IMR-90 (cell line): ENCODE measurements at regions of chr2 and their contacts with region 1.

Region 1: GRCh38 chr2:70948337-70949003 is 12.8 kb downstream of the ATP6V1B1 start:
- DNase-seq: peak; percentile 71
- ATAC-seq: peak; percentile 96
- H3K4me3 ChIP-seq: peak overlapping the region; percentile 37; the same call in 1 of the 2 replicates
- H3K27ac ChIP-seq: no peak overlapping the region
- H3K4me1 ChIP-seq: peaks cover 4% of the 10 kb centered on the region
- H3K27me3 ChIP-seq: no peaks in the 10 kb centered on the region
- CTCF ChIP-seq: peak; percentile 78
- POLR2A ChIP-seq: no peak
- RAD21 ChIP-seq: peak; percentile 50

Region 2: GRCh38 chr2:70301344-70302194 is 646.9 kb before region 1 on chr2 and contains the start of gene FAM136A:
- CTCF ChIA-PET with region 1: interaction called, 8 read pairs
- POLR2A ChIA-PET with region 1: no interaction called
- dilution Hi-C with region 1: no loop called
- in situ Hi-C with region 1: no loop called
- intact Hi-C with region 1: loop called (anchors 1 kb)
- DNase-seq: peak; percentile 56
- ATAC-seq: peak; percentile 99
- H3K4me3 ChIP-seq: peak within 1 kb of the TSS; percentile 90
- H3K27ac ChIP-seq: peak within 1 kb of the TSS; percentile 64
- H3K4me1 ChIP-seq: peaks cover 3% of the 10 kb centered on the region; the same call in 1 of the 2 replicates
- H3K27me3 ChIP-seq: no peaks in the 10 kb centered on the region
- CTCF ChIP-seq: peak; percentile 84
- POLR2A ChIP-seq: no peak
- RAD21 ChIP-seq: peak; percentile 43
- total RNA-seq, gene FAM136A: 19.9 and 35.0 TPM in 2 replicates

Region 3: GRCh38 chr2:70789304-70790135 is 158.9 kb before region 1 on chr2:
- CTCF ChIA-PET with region 1: no interaction called
- POLR2A ChIA-PET with region 1: no interaction called
- dilution Hi-C with region 1: no loop called
- in situ Hi-C with region 1: no loop called
- intact Hi-C with region 1: loop called (anchors 1 kb)
- DNase-seq: peak; percentile 25
- ATAC-seq: peak; percentile 81
- H3K4me3 ChIP-seq: no peak overlapping the region
- H3K27ac ChIP-seq: no peak overlapping the region
- H3K4me1 ChIP-seq: no peaks in the 10 kb centered on the region
- H3K27me3 ChIP-seq: peaks cover 33% of the 10 kb centered on the region
- CTCF ChIP-seq: peak; percentile 45
- POLR2A ChIP-seq: no peak
- RAD21 ChIP-seq: peak; percentile 49

Region 4: DNA sequence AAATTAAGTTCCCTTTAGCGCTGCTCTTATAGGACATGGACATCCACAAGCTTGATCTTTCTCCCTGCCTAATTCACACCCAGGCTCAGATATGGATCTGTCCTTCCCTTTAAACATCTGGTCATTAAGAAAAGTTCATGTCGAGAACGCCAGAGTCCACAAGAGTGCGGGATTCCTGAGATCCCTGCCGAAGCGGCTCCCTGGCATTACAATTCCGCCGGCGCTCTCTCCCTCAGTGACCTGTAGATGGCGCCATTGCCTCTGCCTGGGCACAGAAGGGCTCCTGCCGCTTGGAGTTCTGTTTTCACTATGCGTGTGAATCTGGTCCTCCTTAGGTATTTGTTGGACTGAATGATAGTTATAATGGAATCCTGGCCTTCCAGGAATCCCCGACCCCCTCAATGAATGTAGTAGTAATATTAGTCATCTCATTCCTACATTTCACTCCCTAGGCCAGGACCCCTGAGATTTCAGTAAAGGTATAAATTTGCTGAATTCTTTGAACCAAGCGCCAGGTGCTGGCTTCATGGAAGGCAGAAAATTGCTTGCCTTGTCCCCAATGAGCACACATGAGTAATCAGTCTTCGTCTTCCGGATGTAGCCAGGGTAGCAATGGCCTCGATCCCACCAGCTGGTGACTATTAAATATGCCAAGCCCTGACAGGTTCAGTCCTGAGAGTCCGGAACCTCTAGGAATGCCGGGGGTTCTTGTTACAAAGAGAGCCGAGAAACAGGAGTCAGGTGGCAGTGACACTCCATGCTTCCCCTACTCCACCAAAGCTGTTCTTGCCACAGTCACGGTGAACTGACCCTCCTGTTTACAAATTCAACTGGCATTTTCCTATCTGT is 86.5 kb before region 1 on chr2:
- CTCF ChIA-PET with region 1: interaction called, 12 read pairs
- POLR2A ChIA-PET with region 1: no interaction called
- dilution Hi-C with region 1: no loop called
- in situ Hi-C with region 1: loop called (anchors 5 kb)
- intact Hi-C with region 1: loop called (anchors 1 kb)
- DNase-seq: peak; percentile 62
- ATAC-seq: peak; percentile 98
- H3K4me3 ChIP-seq: no peak overlapping the region
- H3K27ac ChIP-seq: no peak overlapping the region
- H3K4me1 ChIP-seq: no peaks in the 10 kb centered on the region
- H3K27me3 ChIP-seq: peaks cover 38% of the 10 kb centered on the region
- CTCF ChIP-seq: peak; percentile 98
- POLR2A ChIP-seq: no peak
- RAD21 ChIP-seq: peak; percentile 87

Region 5: DNA sequence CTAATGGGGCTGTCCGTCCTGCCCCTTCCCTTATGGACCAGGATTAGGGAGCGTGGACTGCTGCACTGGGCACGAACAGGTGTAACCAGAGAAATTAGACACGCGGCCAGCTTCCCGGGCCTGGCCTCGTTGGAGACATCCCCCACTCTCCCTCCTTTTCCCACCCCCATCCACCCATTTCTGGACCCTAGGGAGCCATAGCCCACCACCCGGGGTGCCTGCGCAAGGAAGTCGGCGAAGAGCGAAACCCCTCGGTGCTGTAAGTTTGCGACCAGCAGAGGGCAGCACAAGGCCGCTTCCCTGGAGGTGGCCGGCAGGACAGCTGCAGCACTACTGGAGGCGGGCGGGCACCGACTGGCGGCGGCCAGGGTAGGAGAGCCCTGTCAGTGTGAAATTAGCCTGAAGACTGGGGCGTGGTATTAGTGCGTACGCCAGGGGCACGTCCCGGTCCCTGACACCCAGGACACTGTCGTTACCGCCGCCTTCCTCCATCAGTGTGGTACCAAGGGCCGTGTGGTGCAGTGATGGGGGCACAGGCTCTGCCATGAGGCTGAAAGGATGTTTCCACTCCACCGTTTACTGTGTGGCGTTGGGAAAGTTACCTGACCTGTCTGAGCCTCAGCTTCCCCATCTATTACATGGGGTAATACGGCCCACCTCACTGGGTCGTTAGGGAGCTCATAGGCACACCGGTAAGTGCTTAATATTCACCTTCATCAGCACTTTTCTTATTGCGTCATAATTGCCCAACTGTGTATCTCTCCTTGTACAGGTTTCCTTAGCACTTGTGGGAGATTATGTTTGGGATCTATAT is 76.9 kb before region 1 on chr2:
- CTCF ChIA-PET with region 1: interaction called, 22 read pairs
- POLR2A ChIA-PET with region 1: interaction called, 9 read pairs
- dilution Hi-C with region 1: no loop called
- in situ Hi-C with region 1: loop called (anchors 5 kb)
- intact Hi-C with region 1: loop called (anchors 1 kb)
- DNase-seq: peak; percentile 68
- ATAC-seq: peak; percentile 100
- H3K4me3 ChIP-seq: no peak overlapping the region
- H3K27ac ChIP-seq: no peak overlapping the region
- H3K4me1 ChIP-seq: no peaks in the 10 kb centered on the region
- H3K27me3 ChIP-seq: peaks cover 27% of the 10 kb centered on the region
- CTCF ChIP-seq: peak; percentile 94
- POLR2A ChIP-seq: no peak
- RAD21 ChIP-seq: peak; percentile 90

Region 6: DNA sequence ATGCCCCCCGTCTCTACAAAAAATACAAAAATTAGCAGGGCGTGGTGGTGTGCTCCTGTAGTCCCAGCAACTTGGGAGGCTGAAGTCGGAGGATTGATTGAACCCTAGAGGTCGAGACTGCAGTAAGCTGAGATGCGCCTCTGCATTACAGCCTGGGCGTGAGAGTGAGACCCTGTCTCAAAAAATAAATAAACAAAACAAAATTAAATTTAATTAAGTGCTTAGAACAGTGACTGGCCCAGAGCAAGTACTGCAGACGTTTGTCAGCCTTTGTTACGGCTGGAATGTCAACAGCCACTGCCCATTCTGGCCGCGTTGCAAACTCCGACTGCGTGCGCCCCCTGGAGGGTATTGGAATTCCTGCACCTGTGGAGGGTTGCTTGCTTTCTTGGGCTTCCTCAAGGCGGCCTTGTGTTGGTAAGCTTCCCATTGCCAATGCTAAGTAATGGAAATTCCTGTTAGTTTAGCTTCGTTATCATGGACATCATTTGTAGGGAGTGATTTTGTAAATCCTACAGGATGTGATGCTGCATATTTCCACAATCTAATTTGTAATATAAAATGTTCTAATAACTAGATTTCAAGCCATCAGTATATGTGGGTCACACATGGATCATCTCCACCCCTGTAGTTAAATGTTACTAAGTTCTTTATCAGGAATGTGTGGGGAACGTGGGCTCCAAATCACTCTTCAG is 28.7 kb before region 1 on chr2:
- CTCF ChIA-PET with region 1: interaction called, 7 read pairs
- POLR2A ChIA-PET with region 1: no interaction called
- dilution Hi-C with region 1: no loop called
- in situ Hi-C with region 1: no loop called
- intact Hi-C with region 1: loop called (anchors 1 kb)
- DNase-seq: peak; percentile 64
- ATAC-seq: peak; percentile 96
- H3K4me3 ChIP-seq: no peak overlapping the region
- H3K27ac ChIP-seq: no peak overlapping the region
- H3K4me1 ChIP-seq: no peaks in the 10 kb centered on the region
- H3K27me3 ChIP-seq: no peaks in the 10 kb centered on the region
- CTCF ChIP-seq: peak; percentile 88
- POLR2A ChIP-seq: no peak
- RAD21 ChIP-seq: peak; percentile 74

Region 7: DNA sequence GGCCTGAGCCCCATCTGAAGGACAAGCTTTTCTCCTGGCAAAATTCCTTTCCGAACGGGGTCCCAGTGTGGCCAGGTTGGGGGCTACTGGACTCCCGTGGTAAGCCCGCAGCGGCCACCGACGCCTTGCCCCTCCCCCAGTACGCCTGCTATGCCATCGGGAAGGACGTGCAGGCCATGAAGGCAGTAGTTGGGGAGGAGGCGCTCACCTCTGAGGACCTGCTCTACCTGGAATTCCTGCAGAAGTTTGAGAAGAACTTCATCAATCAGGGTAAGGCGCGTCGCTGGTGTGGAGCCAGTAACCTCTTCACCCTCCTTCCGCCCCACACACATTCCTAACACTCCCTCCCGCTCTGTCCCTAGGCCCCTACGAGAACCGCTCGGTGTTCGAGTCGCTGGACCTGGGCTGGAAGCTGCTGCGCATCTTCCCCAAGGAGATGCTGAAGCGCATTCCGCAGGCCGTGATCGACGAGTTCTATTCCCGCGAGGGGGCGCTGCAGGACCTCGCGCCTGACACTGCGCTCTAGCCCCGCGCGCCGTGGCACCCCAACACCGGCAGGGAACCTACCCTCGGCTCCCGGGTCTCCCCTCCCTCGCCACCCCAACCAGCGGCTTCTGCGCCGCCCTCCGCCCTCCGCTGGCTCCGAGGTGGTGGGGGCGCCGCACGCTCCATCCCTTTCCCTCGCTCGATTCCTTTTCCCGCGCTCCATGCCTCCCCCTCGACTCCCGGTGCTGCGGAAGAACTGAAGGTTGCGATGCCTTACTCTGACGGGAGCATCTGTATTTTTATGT is 16.3 kb after region 1 on chr2:
- CTCF ChIA-PET with region 1: interaction called, 13 read pairs
- POLR2A ChIA-PET with region 1: interaction called, 4 read pairs
- dilution Hi-C with region 1: no loop called
- in situ Hi-C with region 1: no loop called
- intact Hi-C with region 1: no loop called
- DNase-seq: peak; percentile 58
- ATAC-seq: peak; percentile 96
- H3K4me3 ChIP-seq: peak overlapping the region; percentile 40
- H3K27ac ChIP-seq: no peak overlapping the region
- H3K4me1 ChIP-seq: no peaks in the 10 kb centered on the region
- H3K27me3 ChIP-seq: peaks cover 5% of the 10 kb centered on the region; the same call in 1 of the 2 replicates
- CTCF ChIP-seq: peak; percentile 75
- POLR2A ChIP-seq: no peak
- RAD21 ChIP-seq: peak; percentile 63

Region 8: DNA sequence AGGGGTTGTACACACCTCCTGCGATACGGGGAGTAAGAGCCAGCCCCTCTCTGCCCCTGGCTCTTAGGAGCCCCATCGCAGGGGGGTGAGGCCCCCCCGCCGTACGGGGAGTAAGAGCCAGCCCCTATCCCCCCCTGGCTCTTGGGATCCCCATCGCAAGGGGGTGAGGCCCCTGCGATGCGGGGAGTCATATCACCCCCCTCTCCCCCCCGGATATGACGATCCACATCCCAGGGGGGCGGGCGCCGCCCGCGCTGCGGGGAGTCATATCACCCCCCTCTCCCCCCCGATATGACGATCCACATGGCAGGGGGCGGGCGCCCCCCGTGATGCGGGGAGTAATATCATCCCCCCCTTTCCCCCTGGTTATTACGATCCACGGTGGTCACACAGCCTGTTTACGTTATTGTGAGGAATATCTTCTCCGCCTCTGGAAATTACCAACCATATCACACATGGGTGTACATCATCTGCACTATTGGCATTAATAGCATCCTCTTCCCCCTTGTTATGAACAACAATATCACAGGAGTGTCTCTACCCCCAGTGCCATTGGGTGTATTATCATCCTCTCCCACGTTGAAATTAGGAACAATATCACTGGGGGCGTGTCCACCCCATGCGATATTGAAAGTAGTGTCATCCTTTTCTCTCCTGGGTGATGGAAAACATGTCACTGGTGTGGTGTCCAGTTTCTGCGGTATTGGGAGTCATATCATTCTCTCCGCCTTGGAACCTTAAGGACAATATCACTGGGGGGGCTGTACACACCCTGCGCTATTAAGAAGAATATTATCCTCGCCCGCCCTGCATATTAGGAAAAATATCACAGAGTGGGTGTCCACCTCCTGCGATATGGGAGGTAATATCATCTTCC is 95.3 kb after region 1 on chr2:
- CTCF ChIA-PET with region 1: no interaction called
- POLR2A ChIA-PET with region 1: no interaction called
- dilution Hi-C with region 1: no loop called
- in situ Hi-C with region 1: no loop called
- intact Hi-C with region 1: no loop called
- DNase-seq: no peak
- ATAC-seq: no peak
- H3K4me3 ChIP-seq: no peak overlapping the region
- H3K27ac ChIP-seq: no peak overlapping the region
- H3K4me1 ChIP-seq: no peaks in the 10 kb centered on the region
- H3K27me3 ChIP-seq: no peaks in the 10 kb centered on the region; the same call in 1 of the 2 replicates
- CTCF ChIP-seq: no peak
- POLR2A ChIP-seq: no peak
- RAD21 ChIP-seq: no peak